ENCODE measurements at regions of chr19 and their contacts with region 1.

Region 1: DNA sequence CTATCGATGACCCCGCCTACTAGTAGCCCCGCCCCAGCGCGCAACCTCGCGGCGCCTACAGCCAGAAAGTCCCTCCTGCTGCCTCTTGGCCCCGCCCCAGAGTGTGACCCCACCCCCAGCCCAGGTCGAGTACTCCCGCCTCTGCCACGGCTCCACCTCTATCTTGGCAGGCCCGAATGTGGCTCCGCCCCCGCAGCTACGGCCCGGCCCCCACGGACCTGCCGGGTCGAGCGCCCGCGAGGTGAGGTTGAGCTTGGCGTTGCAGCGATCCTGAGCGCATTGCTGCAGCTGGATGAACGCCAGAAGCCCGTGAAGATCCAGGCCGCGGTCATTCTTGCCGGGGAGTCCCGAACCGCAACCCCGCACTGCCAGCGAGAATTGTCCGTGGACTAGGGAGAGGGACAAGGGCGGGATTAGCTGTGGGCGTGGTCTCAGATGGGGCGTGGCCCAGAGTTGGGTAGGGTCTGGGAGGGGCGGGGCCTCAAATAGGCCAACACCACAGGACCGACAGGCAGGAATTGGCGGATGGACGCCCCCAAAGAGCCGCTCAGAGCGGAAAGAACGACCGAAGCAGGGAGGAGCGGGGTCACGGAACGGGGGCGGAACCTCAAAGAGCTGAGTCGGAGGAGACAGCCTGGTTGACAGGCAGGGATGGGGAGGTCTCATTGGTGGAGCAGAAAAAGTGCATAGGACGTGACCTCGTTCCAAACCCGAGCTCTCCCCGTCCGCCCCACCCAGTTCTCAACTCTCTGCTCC is 1.8 kb downstream of the LYPD3 start:
- DNase-seq: peak; percentile 98 to 100 (median 98)
- H3K4me3 ChIP-seq: peak overlapping the region; percentile 79 to 98
- H3K4me3 Mint-ChIP-seq: peak overlapping the region; percentile 90 to 98 (median 94)
- H3K27ac ChIP-seq: peak overlapping the region; percentile 80
- H3K27ac Mint-ChIP-seq: peak overlapping the region; percentile 95 to 100 (median 99)
- H3K4me1 ChIP-seq: peaks cover 34% of the 10 kb centered on the region
- H3K4me1 Mint-ChIP-seq: peaks cover 25 to 64% (median 43%) of the 10 kb centered on the region in 4 donors
- H3K27me3 ChIP-seq: no peaks in the 10 kb centered on the region
- H3K27me3 Mint-ChIP-seq: no peaks in the 10 kb centered on the region

Region 2: DNA sequence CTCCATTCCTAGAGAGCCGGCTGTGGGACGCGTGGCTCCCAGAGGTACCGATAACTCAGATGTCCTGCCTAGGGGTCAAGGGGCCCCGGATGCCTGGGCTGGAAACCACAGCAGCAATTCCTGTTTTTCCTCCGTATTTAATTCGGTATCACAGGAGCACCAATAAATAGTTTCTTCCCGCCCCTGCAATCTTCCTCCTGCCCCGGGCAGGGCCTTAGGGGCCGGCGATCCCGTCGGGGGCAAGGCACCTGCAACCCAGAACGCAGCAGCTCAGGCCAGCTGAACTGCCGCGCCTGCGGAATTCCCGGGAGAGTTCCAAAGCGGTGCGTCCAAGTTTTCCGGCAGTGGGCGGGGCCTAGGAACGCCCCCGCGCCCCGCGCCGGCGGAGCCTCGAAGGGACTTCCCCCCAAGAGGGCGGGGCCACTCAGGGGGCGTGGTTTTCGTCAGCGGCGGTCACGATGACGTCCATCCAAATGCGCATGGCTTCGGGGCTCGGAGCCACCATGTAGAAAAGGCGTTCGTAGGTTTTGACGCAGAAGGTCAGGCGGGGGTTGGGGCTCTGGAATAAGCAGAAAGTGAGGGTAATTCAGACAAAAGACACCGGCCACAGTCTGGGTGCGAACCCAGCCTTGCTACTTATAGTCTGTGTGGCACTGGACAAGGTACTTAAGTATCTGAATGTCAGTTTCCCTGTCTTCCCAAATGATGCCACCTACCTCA is 11.6 kb after region 1 on chr19:
- CTCF ChIA-PET with region 1: interaction called, 17 read pairs
- POLR2A ChIA-PET with region 1: interaction called, 56 read pairs
- intact Hi-C with region 1: loop called (anchors 1 kb)
- DNase-seq: peak; percentile 94 to 97 (median 95)
- H3K4me3 ChIP-seq: peak overlapping the region; percentile 26 to 53
- H3K4me3 Mint-ChIP-seq: peak overlapping the region; percentile 77 to 90 (median 86)
- H3K27ac ChIP-seq: peak overlapping the region; percentile 58
- H3K27ac Mint-ChIP-seq: peak overlapping the region; percentile 80 to 100 (median 99)
- H3K4me1 ChIP-seq: peaks cover 18% of the 10 kb centered on the region
- H3K4me1 Mint-ChIP-seq: peaks cover 12 to 31% (median 19%) of the 10 kb centered on the region in 4 donors
- H3K27me3 ChIP-seq: no peaks in the 10 kb centered on the region
- H3K27me3 Mint-ChIP-seq: no peaks in the 10 kb centered on the region

Region 3: GRCh38 chr19:43495082-43495481 is 31.5 kb after region 1 on chr19:
- CTCF ChIA-PET with region 1: no interaction called
- POLR2A ChIA-PET with region 1: no interaction called
- intact Hi-C with region 1: no loop called
- DNase-seq: no peak
- H3K4me3 ChIP-seq: no peak overlapping the region
- H3K4me3 Mint-ChIP-seq: no peak overlapping the region
- H3K27ac ChIP-seq: no peak overlapping the region
- H3K27ac Mint-ChIP-seq: peak overlapping the region in 1 of 7 donors; percentile 29
- H3K4me1 ChIP-seq: no peaks in the 10 kb centered on the region
- H3K4me1 Mint-ChIP-seq: peaks cover 2 to 9% (median 3%) of the 10 kb centered on the region in 4 donors
- H3K27me3 ChIP-seq: no peaks in the 10 kb centered on the region
- H3K27me3 Mint-ChIP-seq: no peaks in the 10 kb centered on the region

Region 4: DNA sequence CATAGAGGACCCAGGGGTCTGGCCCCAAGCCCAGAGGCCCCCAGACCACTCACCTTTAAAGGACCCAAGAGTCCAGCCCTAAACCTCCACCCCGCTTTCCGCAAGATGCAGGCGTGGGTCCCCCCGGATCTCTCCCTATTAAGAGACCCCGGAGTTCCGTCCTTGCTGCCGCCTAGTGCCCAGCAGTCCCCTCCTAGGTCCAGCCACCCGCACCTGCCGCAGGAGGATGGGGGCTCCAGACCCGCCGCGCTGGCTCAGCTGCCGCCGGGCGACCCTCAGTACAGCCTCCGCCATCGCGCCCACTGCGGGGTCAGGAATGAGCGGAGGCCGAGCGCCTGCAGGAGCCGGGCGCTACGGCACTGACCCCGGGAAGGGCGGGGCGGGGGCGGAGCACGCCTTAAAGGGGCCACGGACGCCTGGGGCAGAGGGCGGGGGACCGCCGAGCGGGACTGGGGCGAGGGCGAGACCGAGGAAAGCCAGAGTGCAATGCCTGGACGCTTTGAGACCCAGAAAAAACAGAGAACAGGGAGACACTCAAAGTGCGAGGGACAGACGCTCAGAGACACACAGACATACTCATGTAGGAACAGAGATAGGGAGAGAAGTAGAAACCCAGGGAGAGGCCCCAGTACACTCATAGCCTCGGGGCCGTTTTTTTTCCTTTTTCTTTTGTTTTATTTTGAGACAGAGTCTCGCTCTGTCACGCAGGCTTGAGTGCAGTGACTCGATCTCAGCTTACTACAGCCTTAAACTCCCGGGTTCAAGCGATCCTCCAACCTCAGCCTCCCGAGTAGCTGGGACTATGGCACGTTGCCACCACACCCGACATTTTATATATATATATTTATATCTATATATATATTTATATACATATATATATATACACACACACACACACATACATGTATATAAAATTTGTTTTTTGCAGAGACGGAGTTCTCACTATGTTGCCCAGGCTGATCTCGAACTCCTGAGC is 63.6 kb after region 1 on chr19 and contains the start of gene ETHE1:
- CTCF ChIA-PET with region 1: interaction called, 4 read pairs
- POLR2A ChIA-PET with region 1: interaction called, 33 read pairs
- intact Hi-C with region 1: no loop called
- DNase-seq: peak; percentile 52 to 68 (median 57)
- H3K4me3 ChIP-seq: peak within 1 kb of the TSS; percentile 60 to 90
- H3K4me3 Mint-ChIP-seq: peak within 1 kb of the TSS; percentile 75 to 94 (median 80)
- H3K27ac ChIP-seq: peak within 1 kb of the TSS; percentile 67
- H3K27ac Mint-ChIP-seq: peak within 1 kb of the TSS; percentile 37 to 94 (median 88)
- H3K4me1 ChIP-seq: peaks cover 27% of the 10 kb centered on the region
- H3K4me1 Mint-ChIP-seq: peaks cover 17 to 36% (median 22%) of the 10 kb centered on the region in 4 donors
- H3K27me3 ChIP-seq: no peaks in the 10 kb centered on the region
- H3K27me3 Mint-ChIP-seq: no peaks in the 10 kb centered on the region
- total RNA-seq, gene ETHE1: 23.9 to 29.1 TPM